ENCODE measurements at regions of chr10 and their contacts with region 1.

Region 1: GRCh38 chr10:110497438-110498086 is at the start of gene DUSP5:
- DNase-seq: peak; percentile 94 to 95
- ATAC-seq: peak; percentile 76 to 90 (median 87)
- H3K4me3 ChIP-seq: peak within 1 kb of the TSS; percentile 62 to 94 (median 83)
- H3K27ac ChIP-seq: peak within 1 kb of the TSS; percentile 84 to 98 (median 96)
- H3K4me1 ChIP-seq: peaks cover 15 to 66% (median 52%) of the 10 kb centered on the region in 9 donors
- H3K27me3 ChIP-seq: peaks cover 0 to 8% (median 0%) of the 10 kb centered on the region in 7 donors
- CTCF ChIP-seq: peak in 3 of 9 donors; percentile 4 to 11 (median 9)
- total RNA-seq, gene DUSP5: 9.0 to 53.7 (median 22.9) TPM

Region 2: GRCh38 chr10:110225756-110226542 is 271.6 kb before region 1 on chr10:
- intact Hi-C with region 1: loop called in 1 of 10 experiments (anchors 10 kb)
- DNase-seq: peak; percentile 92 to 93
- ATAC-seq: peak; percentile 67 to 85 (median 72)
- H3K4me3 ChIP-seq: peak overlapping the region; percentile 64 to 99 (median 81)
- H3K27ac ChIP-seq: peak overlapping the region; percentile 85 to 93 (median 88)
- H3K4me1 ChIP-seq: peaks cover 7 to 60% (median 45%) of the 10 kb centered on the region in 9 donors
- H3K27me3 ChIP-seq: no peaks in the 10 kb centered on the region
- CTCF ChIP-seq: peak; percentile 54 to 85 (median 71)

Region 3: DNA sequence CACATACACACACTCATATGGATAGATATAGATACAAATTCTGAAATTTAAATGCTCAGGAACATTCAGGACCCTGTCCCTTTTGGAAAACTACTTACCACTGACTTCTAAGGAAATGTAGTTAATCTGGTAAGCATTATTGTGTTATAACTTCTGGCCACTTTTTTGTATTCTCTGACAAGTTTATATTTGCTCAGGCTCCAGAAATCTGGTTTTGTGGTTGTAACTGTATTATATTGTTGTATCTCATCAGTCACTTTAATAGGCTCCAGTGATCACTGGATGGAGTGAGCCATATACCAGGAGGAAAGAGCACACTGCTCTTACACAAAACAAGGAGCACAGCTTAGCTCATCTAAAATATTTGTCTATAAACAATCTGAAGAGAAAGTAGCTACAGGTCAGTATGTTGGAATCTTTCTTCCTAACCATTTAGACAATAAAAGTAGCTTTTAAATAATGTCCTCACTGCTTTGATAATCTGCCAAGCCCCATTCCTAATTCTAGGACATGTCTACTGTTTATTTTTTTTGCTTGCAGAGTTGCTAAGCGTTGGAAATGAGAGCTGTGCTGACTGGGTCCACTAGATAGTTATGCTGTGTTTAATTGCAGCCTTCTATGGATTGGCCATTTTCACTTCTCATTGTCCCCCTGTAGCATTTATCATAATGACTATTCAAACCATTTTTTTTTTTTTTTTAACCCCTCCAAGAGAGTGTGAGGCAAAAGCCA is 236.7 kb before region 1 on chr10:
- intact Hi-C with region 1: no loop called
- DNase-seq: no peak
- ATAC-seq: peak; percentile 39 to 90 (median 76)
- H3K4me3 ChIP-seq: no peak overlapping the region
- H3K27ac ChIP-seq: peak overlapping the region in 9 of 10 donors; percentile 7 to 64 (median 59)
- H3K4me1 ChIP-seq: peaks cover 3 to 71% (median 36%) of the 10 kb centered on the region in 9 donors
- H3K27me3 ChIP-seq: no peaks in the 10 kb centered on the region
- CTCF ChIP-seq: no peak

Region 4: GRCh38 chr10:110354322-110354766 is 143.2 kb before region 1 on chr10:
- intact Hi-C with region 1: loop called in 4 of 10 experiments (anchors 2 to 5 kb)
- DNase-seq: peak; percentile 64 to 84
- ATAC-seq: peak; percentile 72 to 89 (median 85)
- H3K4me3 ChIP-seq: no peak overlapping the region
- H3K27ac ChIP-seq: peak overlapping the region in 1 of 10 donors; percentile 38
- H3K4me1 ChIP-seq: peaks cover 0 to 46% (median 9%) of the 10 kb centered on the region in 9 donors
- H3K27me3 ChIP-seq: peaks cover 0 to 8% (median 0%) of the 10 kb centered on the region in 7 donors
- CTCF ChIP-seq: peak; percentile 24 to 82 (median 75)

Region 5: DNA sequence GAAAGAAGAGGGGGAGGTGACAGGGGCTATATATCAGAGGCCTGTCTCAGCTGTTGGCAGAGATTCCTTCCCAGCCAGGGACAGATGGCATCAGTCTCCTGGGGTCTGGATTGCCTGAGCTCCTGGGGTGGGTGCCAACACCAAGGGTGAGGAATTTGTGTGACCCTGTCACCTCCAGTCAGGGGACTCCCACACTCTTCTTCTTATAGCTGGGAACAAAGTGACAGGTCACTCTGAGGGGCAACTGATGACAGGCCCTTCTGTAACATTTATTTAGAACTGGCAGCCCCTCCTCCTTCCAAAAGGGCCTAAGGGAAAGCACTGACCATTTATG is 53.6 kb before region 1 on chr10:
- intact Hi-C with region 1: no loop called
- DNase-seq: peak; percentile 52 to 54
- ATAC-seq: peak; percentile 63 to 95 (median 78)
- H3K4me3 ChIP-seq: no peak overlapping the region
- H3K27ac ChIP-seq: peak overlapping the region in 4 of 10 donors; percentile 21 to 47 (median 32)
- H3K4me1 ChIP-seq: peaks cover 5 to 32% (median 10%) of the 10 kb centered on the region in 9 donors
- H3K27me3 ChIP-seq: no peaks in the 10 kb centered on the region
- CTCF ChIP-seq: no peak

Region 6: DNA sequence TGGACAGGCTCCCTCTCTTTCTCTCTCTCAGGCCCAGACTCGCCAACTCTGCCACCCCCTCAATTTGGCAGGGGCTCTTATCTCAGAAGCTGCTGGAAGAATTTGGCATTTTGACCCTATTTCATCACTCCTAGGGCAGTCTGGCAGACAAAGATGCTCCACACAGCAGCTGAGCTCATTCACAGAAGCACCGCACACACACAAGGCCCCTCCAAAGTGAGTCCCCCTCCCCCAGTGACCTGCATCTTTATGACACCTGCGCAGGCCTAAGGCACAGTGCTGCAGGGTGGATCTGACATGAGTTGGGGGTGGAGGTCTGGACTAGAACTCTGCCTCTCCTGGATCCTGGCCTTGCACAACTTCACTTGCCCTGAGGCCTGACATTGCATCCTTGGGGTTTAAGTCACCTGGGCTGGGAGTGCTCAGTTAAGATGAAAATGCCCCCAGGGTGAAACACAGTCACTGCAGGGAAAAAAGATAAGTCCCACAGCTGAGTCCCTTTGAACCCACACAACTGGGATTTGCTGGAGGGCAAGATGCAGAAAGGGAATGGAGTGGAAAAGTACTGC is 41.0 kb before region 1 on chr10:
- intact Hi-C with region 1: loop called in 1 of 10 experiments (anchors 5 kb)
- DNase-seq: no peak
- ATAC-seq: no peak
- H3K4me3 ChIP-seq: no peak overlapping the region
- H3K27ac ChIP-seq: peak overlapping the region in 2 of 10 donors; percentile 44 to 76
- H3K4me1 ChIP-seq: peaks cover 5 to 55% (median 23%) of the 10 kb centered on the region in 9 donors
- H3K27me3 ChIP-seq: no peaks in the 10 kb centered on the region
- CTCF ChIP-seq: no peak

Region 7: GRCh38 chr10:110547139-110547761 is 49.7 kb after region 1 on chr10:
- intact Hi-C with region 1: loop called in 4 of 10 experiments (anchors 2 to 5 kb)
- DNase-seq: peak in 1 of 2 donors; percentile 12
- ATAC-seq: peak in 6 of 8 donors; percentile 66 to 80 (median 76)
- H3K4me3 ChIP-seq: no peak overlapping the region
- H3K27ac ChIP-seq: no peak overlapping the region
- H3K4me1 ChIP-seq: peaks cover 0 to 14% (median 0%) of the 10 kb centered on the region in 9 donors
- H3K27me3 ChIP-seq: peaks cover 0 to 15% (median 0%) of the 10 kb centered on the region in 7 donors
- CTCF ChIP-seq: peak; percentile 72 to 88 (median 81)